GM23248 (cell line): ENCODE measurements at regions of chr2 and their contacts with region 1.

Region 1: DNA sequence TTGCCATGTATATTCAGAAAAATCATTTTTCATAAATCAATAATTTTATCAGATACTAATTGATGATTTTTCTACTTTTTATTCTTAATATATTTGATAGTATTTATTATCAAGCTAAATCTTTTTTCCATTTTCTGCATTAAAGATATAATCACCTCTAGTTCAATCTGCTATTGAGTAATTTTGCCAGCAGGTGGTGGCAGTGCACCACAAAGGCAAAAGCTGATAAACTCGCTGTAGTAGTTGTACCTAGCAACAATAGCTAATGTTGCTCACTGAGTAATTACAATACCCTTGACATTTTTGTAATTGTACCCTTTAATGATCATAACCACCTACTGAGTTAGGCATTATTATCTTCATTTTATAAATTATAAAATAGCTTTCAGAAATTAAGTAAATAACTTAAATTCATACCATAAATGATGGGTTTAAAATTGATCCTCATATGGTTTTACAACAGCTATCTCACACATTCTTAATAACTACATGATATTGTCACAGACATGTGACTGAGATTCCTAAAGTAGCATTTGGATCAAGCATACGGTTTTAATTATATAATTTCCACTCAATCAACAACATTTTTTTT is 52.0 kb upstream of the CALCRL start:
- DNase-seq: peak; percentile 80
- H3K4me3 ChIP-seq: no peak overlapping the region
- H3K27ac ChIP-seq: peak overlapping the region; percentile 50
- H3K4me1 ChIP-seq: peaks cover 18% of the 10 kb centered on the region
- H3K27me3 ChIP-seq: no peaks in the 10 kb centered on the region

Region 2: GRCh38 chr2:187574969-187575750 is 75.1 kb after region 1 on chr2:
- in situ Hi-C with region 1: loop called (anchors 5 kb)
- DNase-seq: peak; percentile 37
- H3K4me3 ChIP-seq: peak overlapping the region; percentile 30; the same call in 1 of the 2 replicates
- H3K27ac ChIP-seq: peak overlapping the region; percentile 39
- H3K4me1 ChIP-seq: peaks cover 14% of the 10 kb centered on the region
- H3K27me3 ChIP-seq: no peaks in the 10 kb centered on the region

Region 3: GRCh38 chr2:187842978-187843847 is 343.2 kb after region 1 on chr2:
- in situ Hi-C with region 1: loop called (anchors 10 kb)
- DNase-seq: peak; percentile 81
- H3K4me3 ChIP-seq: no peak overlapping the region
- H3K27ac ChIP-seq: no peak overlapping the region
- H3K4me1 ChIP-seq: no peaks in the 10 kb centered on the region
- H3K27me3 ChIP-seq: no peaks in the 10 kb centered on the region